ENCODE measurements at regions of chr12 and their contacts with region 1.

Region 1: DNA sequence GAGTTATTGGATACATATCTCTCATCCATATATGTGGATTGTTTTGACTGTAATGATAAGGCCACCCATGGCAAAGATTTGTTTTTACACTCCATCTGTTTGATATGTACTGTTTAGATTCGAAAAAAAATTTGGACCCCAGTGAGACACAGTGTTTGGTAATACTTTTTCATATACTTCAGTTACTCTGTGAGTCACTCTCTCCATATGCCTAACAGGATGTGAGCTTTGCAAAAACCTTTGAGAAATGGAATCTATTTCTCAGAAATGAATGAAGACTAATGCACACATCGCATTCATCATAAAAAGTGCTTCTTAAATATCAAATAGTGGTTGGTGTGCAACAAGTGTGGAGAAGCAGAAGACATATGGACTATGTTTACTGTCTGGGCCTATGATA is 781.5 kb downstream of the SLC6A15 start:
- DNase-seq: peak; percentile 83
- ATAC-seq: peak; percentile 92
- H3K4me3 ChIP-seq: no peak overlapping the region
- H3K27ac ChIP-seq: no peak overlapping the region
- H3K4me1 ChIP-seq: peaks cover 2% of the 10 kb centered on the region; the same call in 1 of the 2 replicates
- H3K27me3 ChIP-seq: no peaks in the 10 kb centered on the region
- CTCF ChIP-seq: no peak
- POLR2A ChIP-seq: no peak
- RAD21 ChIP-seq: no peak

Region 2: GRCh38 chr12:84375449-84376170 is 244.5 kb after region 1 on chr12:
- CTCF ChIA-PET with region 1: no interaction called
- POLR2A ChIA-PET with region 1: no interaction called
- dilution Hi-C with region 1: no loop called
- in situ Hi-C with region 1: no loop called
- intact Hi-C with region 1: loop called (anchors 5 kb)
- DNase-seq: peak; percentile 90
- ATAC-seq: peak; percentile 92
- H3K4me3 ChIP-seq: no peak overlapping the region
- H3K27ac ChIP-seq: no peak overlapping the region
- H3K4me1 ChIP-seq: no peaks in the 10 kb centered on the region
- H3K27me3 ChIP-seq: no peaks in the 10 kb centered on the region
- CTCF ChIP-seq: no peak
- POLR2A ChIP-seq: no peak
- RAD21 ChIP-seq: no peak